ENCODE measurements at regions of chr16 and their contacts with region 1.

Region 1: DNA sequence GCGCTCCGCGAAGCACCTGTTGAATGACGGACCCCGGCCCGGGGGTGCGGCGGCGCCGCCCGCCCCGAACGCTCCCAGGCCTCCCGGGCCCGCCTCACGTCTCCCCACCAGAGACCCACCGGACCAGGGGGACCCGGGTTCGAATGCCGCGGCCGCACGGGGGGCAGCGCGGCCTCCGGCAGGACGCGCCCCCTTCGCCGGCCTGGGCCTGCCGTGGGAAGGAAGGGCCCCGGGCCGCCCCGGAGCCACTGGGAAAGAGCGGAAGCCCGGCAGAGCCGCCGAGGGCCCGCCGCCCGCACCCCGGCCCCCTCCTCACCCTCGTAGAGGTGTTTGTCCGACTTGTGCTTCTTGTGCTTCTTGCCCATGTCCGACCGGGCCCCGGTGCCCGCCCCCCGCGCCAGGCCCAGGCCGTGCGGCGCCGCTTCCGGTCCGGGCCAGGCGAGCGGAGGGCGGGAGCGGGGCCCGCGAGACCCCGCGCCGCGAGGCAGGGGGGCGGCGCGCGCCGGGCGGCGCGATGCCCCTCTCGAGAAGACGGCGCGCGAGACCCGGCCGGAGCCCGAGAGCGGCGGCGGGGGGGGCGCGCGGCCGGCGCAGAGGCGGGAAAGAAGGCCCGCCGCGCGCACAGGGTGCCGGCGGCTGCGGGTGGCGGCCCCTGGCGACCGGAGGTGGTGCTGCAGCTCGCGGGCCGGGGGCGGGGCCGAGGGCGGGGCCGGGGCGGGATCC is at the start of gene BRD7:
- DNase-seq: peak; percentile 39
- H3K4me3 ChIP-seq: peak within 1 kb of the TSS; percentile 46 to 96 (median 87)
- H3K27ac ChIP-seq: peak within 1 kb of the TSS; percentile 63
- H3K4me1 ChIP-seq: peaks cover 8% of the 10 kb centered on the region
- H3K27me3 ChIP-seq: no peaks in the 10 kb centered on the region
- CTCF ChIP-seq: peak in 1 of 2 donors; percentile 48
- POLR2A ChIP-seq: no peak
- total RNA-seq, gene BRD7: 69.1 and 78.0 TPM in 2 replicates

Region 2: GRCh38 chr16:50266337-50267091 is 102.1 kb before region 1 on chr16 and contains the start of gene ADCY7:
- CTCF ChIA-PET with region 1: interaction called, 3 read pairs
- POLR2A ChIA-PET with region 1: no interaction called
- dilution Hi-C with region 1: no loop called
- intact Hi-C with region 1: loop called (anchors 5 kb)
- DNase-seq: peak; percentile 38
- H3K4me3 ChIP-seq: peak within 1 kb of the TSS in 1 of 3 experiments; percentile 13
- H3K27ac ChIP-seq: peak within 1 kb of the TSS; percentile 43
- H3K4me1 ChIP-seq: peaks cover 14% of the 10 kb centered on the region
- H3K27me3 ChIP-seq: no peaks in the 10 kb centered on the region
- CTCF ChIP-seq: no peak
- POLR2A ChIP-seq: no peak
- total RNA-seq, gene ADCY7: 9.3 and 9.7 TPM in 2 replicates

Region 3: GRCh38 chr16:50509521-50510341 is 141.2 kb after region 1 on chr16:
- CTCF ChIA-PET with region 1: no interaction called
- POLR2A ChIA-PET with region 1: no interaction called
- dilution Hi-C with region 1: no loop called
- intact Hi-C with region 1: loop called (anchors 2 kb)
- DNase-seq: peak; percentile 42
- H3K4me3 ChIP-seq: no peak overlapping the region
- H3K27ac ChIP-seq: no peak overlapping the region
- H3K4me1 ChIP-seq: no peaks in the 10 kb centered on the region
- H3K27me3 ChIP-seq: no peaks in the 10 kb centered on the region
- CTCF ChIP-seq: peak; percentile 66 to 69
- POLR2A ChIP-seq: no peak

Region 4: DNA sequence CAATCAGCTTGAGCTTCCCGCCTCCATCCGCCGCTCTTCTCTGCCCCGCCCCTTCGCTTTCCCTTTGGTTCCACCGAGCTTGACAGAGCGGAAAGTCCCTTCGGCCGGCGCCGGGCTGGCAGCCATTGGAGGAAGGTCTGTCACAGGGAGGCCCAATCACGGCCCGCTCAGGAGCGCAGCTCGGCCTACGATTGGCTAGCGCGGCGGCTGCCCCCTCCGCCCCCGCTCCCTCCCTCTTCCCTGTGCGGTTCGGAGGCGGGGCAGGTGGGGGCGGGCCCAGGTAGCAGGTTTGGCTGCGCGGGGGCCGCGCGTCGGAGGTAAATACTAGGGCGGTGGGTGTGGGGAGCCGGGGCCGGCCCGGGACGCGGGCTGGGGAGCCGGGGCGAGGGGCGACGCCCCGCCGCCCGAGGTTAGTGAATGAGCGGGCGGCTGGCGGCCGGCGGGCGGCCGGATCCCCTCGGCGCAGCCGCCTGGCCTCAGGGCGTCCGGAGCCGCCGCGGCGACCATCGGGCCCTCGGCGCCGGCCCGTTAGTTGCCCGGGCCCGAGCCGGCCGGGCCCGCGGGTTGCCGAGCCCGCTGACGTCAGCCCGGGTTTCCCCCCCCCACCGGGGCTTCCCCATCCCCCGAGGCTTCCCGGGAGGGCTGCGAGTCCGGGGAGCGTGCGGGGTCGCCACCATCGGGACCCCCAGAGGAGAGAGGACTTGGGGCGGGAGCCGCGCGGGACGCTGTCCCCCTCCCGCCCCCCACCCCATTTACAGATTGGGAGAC is 373.4 kb after region 1 on chr16 and contains the start of gene CYLD:
- CTCF ChIA-PET with region 1: no interaction called
- POLR2A ChIA-PET with region 1: no interaction called
- dilution Hi-C with region 1: no loop called
- intact Hi-C with region 1: loop called (anchors 2 kb)
- DNase-seq: peak; percentile 100
- H3K4me3 ChIP-seq: peak within 1 kb of the TSS; percentile 63 to 92 (median 79)
- H3K27ac ChIP-seq: peak within 1 kb of the TSS; percentile 62
- H3K4me1 ChIP-seq: peaks cover 11% of the 10 kb centered on the region
- H3K27me3 ChIP-seq: peaks cover 2 to 3% of the 10 kb centered on the region in 2 experiments
- CTCF ChIP-seq: no peak
- POLR2A ChIP-seq: no peak
- total RNA-seq, gene CYLD: 21.5 and 22.2 TPM in 2 replicates

Measured in endothelial cell of umbilical vein (primary cell).